ENCODE measurements at regions of chr1 and their contacts with region 1.

Region 1: DNA sequence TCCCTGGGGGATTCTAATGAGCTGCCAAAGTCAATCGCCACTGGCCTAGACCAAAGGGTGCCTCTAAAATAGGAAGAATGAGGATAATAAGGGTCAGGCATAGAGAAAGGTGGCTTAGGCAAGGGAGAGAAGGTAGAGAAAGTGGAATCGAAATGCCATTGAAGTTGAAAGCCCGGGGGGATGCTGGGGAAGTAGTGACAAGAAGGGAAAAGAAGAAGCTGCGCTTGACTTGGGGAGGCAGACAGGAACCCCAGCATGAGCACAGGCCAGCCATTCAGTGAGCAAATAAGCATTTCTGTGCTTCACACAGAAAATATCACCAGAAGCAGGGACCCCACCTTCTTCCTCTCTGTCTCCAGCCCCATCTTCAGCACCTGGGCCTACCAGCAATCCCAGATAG is 1.5 kb downstream of the CD2 start:
- DNase-seq: no peak
- ATAC-seq: no peak
- H3K4me3 ChIP-seq: no peak overlapping the region
- H3K27ac ChIP-seq: no peak overlapping the region
- H3K4me1 ChIP-seq: no peaks in the 10 kb centered on the region
- H3K27me3 ChIP-seq: no peaks in the 10 kb centered on the region

Region 2: GRCh38 chr1:116605315-116605714 is 150.4 kb before region 1 on chr1:
- intact Hi-C with region 1: no loop called
- DNase-seq: no peak
- ATAC-seq: no peak
- H3K4me3 ChIP-seq: no peak overlapping the region
- H3K27ac ChIP-seq: no peak overlapping the region
- H3K4me1 ChIP-seq: no peaks in the 10 kb centered on the region
- H3K27me3 ChIP-seq: no peaks in the 10 kb centered on the region

Region 3: DNA sequence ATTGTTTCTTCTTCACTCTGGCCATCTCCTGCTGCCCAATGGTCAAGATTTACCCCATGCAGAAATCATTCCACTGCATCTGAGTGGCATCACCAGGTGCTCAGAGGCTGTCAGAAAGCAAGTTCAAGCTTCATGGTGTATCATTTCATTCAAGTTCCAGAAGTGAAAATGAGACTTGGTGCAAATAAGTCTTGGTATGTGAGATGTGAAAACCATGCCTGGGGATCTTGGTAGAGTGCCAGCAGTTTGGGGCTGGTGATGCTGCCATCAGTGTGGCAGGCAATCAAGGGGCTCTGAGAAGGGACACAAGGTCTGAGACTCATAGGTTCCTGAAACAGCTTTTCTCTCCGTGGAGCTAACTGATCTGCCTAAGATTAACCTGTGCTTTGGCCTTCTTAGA is 50.6 kb after region 1 on chr1:
- intact Hi-C with region 1: loop called in 1 of 2 experiments (anchors 5 kb)
- DNase-seq: no peak
- ATAC-seq: no peak
- H3K4me3 ChIP-seq: no peak overlapping the region
- H3K27ac ChIP-seq: no peak overlapping the region
- H3K4me1 ChIP-seq: no peaks in the 10 kb centered on the region
- H3K27me3 ChIP-seq: no peaks in the 10 kb centered on the region

Region 4: DNA sequence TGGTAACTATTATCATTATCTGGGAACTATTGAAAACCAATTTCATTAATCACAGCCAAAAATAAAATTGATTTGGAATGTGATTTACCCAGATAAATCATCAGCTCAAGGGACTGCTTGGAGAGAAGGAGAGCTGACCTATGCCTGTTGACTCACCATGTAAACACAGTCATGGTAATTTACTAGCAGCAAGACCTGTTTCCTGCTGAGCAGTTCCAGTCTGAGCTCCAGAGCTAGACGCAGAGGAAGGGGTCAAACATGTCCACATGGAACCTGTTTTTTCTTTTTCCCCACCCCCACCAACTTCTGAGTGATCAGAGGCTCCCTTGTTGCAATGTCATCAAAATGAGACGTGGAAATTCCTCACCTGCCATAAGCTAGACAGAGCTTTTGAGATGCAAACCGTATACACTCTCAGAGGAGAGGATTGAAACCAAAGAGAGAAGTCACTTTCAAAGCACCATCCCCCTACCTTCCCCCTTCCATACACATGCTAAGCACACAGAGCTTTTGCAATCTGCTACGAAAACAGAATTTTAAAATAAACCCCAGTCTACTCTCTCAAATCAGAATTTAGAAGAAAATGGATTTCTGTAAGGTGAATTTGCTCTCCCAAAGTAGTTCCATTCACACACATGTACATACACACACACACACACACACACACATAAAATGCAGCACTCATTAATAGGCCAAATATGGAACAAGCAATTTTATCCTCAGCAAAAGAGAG is 98.2 kb after region 1 on chr1:
- intact Hi-C with region 1: no loop called
- DNase-seq: no peak
- ATAC-seq: no peak
- H3K4me3 ChIP-seq: no peak overlapping the region
- H3K27ac ChIP-seq: no peak overlapping the region
- H3K4me1 ChIP-seq: peaks cover 0 to 2% of the 10 kb centered on the region in 2 donors
- H3K27me3 ChIP-seq: no peaks in the 10 kb centered on the region